ENCODE measurements at regions of chr14 and their contacts with region 1.

Region 1: DNA sequence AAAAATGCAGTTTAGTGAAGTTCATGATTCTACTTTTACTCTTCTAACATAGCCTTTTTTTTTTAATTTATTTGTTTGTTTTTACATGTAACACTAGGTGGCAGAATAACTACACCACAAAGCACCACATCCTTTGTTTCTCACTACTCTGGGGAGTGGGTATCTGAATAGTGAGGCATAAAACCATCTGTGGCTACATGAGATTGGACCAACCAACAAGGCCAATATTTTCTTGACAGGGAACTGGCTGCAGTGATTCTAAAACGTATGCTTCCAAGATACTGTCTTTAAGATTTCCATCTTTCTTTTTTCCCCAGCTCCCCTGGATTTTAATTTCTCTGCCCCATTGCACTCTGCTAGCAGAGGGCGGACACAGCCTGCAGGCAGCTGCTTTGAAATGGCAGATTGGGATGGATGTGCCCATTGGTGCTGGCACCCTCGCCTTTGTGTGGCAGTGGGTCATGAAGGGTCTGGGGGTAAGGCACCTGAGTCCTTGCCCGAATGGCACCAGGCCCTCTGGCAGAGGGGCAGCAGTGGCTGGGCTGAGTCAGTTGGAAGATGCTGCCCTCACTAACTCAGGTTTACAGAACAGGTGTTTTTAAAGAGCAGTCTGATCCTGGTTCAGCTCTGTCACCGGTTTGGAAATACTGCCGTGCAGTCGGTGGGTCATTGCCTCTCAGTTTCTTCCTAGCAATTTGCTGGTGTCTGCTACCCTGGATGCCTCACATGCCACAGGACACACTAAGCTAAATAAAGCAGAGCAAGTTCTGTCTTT is 429.1 kb downstream of the RAD51B start:
- DNase-seq: peak in 3 of 5 donors; percentile 32 to 66 (median 39)
- ATAC-seq: peak; percentile 56 to 75 (median 70)
- H3K4me3 ChIP-seq: no peak overlapping the region
- H3K27ac ChIP-seq: peak overlapping the region in 11 of 12 donors; percentile 23 to 91 (median 85)
- H3K4me1 ChIP-seq: peaks cover 17 to 84% (median 78%) of the 10 kb centered on the region in 12 donors
- H3K27me3 ChIP-seq: no peaks in the 10 kb centered on the region
- CTCF ChIP-seq: peak; percentile 54 to 80 (median 68)
- POLR2A ChIP-seq: no peak

Region 2: DNA sequence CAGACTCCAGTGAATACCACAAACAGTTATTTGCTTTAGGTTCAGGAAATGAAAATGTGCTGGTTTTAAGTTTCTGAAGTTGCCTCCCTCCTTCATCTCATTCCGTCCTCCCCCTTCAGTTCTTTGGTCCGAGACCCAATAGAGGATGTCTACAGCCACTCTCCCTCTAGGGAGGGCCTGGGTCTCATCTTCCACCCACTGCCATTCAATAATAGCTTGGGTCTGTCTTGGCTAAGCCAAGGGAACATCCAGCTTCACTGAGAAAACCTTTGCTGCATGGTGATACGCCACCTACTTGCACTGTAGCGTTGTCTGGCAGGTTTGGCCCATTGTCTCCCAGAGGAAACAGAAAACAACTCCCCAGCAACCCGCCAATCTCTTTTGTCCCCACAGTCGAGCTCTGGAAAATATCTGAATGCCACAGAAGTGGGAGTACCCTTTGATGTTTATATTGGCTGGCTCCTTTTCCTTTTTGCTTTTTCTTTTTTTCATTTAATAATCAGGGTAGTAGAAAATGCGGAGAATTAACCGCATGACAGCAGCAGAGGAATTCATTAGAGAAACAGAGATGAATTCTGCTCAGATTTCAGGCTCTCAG is 49.0 kb before region 1 on chr14:
- intact Hi-C with region 1: no loop called
- DNase-seq: peak in 4 of 5 donors; percentile 34 to 66 (median 48)
- ATAC-seq: peak; percentile 61 to 91 (median 74)
- H3K4me3 ChIP-seq: peak overlapping the region in 1 of 12 donors; percentile 3
- H3K27ac ChIP-seq: peak overlapping the region; percentile 48 to 80 (median 64)
- H3K4me1 ChIP-seq: peaks cover 0 to 34% (median 14%) of the 10 kb centered on the region in 12 donors
- H3K27me3 ChIP-seq: no peaks in the 10 kb centered on the region
- CTCF ChIP-seq: peak in 5 of 12 donors; percentile 15 to 41 (median 23)
- POLR2A ChIP-seq: no peak

Region 3: GRCh38 chr14:68283378-68284123 is 34.9 kb after region 1 on chr14:
- intact Hi-C with region 1: no loop called
- DNase-seq: peak in 4 of 5 donors; percentile 38 to 69 (median 42)
- ATAC-seq: peak; percentile 36 to 68 (median 48)
- H3K4me3 ChIP-seq: no peak overlapping the region
- H3K27ac ChIP-seq: peak overlapping the region in 9 of 12 donors; percentile 0 to 82 (median 40)
- H3K4me1 ChIP-seq: peaks cover 0 to 63% (median 9%) of the 10 kb centered on the region in 12 donors
- H3K27me3 ChIP-seq: no peaks in the 10 kb centered on the region
- CTCF ChIP-seq: no peak
- POLR2A ChIP-seq: no peak

Region 4: DNA sequence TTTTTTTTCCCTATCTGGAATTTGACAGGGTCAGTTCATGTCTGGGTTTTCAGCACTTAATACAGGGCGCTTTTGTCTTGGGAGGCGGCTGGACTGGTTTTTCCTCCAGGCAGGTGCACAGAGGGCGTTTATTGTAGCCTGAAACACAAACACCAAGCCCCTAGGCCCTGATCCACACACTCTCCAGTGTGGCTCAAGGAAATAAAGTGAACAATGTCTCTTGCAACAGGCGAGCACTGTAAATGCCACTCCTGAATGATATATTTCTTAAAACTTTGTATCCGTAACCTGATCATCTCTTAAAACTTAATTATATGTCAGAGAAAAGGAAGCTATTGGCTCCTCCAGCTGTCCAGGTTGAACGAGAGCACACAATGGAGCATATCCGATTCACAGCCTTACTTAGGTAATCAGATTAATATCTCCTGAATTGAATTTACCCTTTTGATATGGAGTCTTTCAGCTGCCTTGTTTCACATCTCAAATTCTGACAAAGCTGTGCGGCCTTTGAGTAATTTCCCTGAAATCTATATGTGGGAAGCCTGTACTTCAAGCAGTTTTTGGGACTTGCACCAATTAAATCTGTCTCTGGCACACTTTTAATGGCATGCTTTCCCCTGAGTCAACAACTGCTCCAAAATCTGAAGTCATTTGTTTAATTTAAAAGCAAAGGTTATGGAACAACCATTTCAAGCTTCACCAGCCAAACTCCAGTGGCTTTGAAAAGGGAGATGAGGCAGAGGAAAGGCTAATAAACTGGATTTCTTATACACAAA is 58.5 kb after region 1 on chr14:
- intact Hi-C with region 1: loop called in 1 of 10 experiments (anchors 10 kb)
- DNase-seq: no peak
- ATAC-seq: peak in 2 of 4 donors; percentile 40 to 68
- H3K4me3 ChIP-seq: no peak overlapping the region
- H3K27ac ChIP-seq: peak overlapping the region in 9 of 12 donors; percentile 2 to 74 (median 49)
- H3K4me1 ChIP-seq: peaks cover 0 to 33% (median 9%) of the 10 kb centered on the region in 12 donors
- H3K27me3 ChIP-seq: no peaks in the 10 kb centered on the region
- CTCF ChIP-seq: no peak
- POLR2A ChIP-seq: no peak

Region 5: GRCh38 chr14:68408680-68409079 is 160.0 kb after region 1 on chr14:
- intact Hi-C with region 1: loop called in 1 of 10 experiments (anchors 10 kb)
- DNase-seq: no peak
- ATAC-seq: no peak
- H3K4me3 ChIP-seq: no peak overlapping the region
- H3K27ac ChIP-seq: peak overlapping the region in 1 of 12 donors; percentile 27
- H3K4me1 ChIP-seq: peaks cover 0 to 48% (median 13%) of the 10 kb centered on the region in 12 donors
- H3K27me3 ChIP-seq: no peaks in the 10 kb centered on the region
- CTCF ChIP-seq: peak in 2 of 12 donors; percentile 7 to 19
- POLR2A ChIP-seq: no peak

Region 6: GRCh38 chr14:68548194-68549056 is 299.8 kb after region 1 on chr14:
- intact Hi-C with region 1: loop called in 1 of 10 experiments (anchors 10 kb)
- DNase-seq: peak; percentile 88 to 96 (median 92)
- ATAC-seq: peak; percentile 89 to 94 (median 92)
- H3K4me3 ChIP-seq: no peak overlapping the region
- H3K27ac ChIP-seq: peak overlapping the region; percentile 87 to 99 (median 96)
- H3K4me1 ChIP-seq: peaks cover 11 to 89% (median 63%) of the 10 kb centered on the region in 12 donors
- H3K27me3 ChIP-seq: no peaks in the 10 kb centered on the region
- CTCF ChIP-seq: no peak
- POLR2A ChIP-seq: peak in 1 of 2 donors; percentile 47

Region 7: DNA sequence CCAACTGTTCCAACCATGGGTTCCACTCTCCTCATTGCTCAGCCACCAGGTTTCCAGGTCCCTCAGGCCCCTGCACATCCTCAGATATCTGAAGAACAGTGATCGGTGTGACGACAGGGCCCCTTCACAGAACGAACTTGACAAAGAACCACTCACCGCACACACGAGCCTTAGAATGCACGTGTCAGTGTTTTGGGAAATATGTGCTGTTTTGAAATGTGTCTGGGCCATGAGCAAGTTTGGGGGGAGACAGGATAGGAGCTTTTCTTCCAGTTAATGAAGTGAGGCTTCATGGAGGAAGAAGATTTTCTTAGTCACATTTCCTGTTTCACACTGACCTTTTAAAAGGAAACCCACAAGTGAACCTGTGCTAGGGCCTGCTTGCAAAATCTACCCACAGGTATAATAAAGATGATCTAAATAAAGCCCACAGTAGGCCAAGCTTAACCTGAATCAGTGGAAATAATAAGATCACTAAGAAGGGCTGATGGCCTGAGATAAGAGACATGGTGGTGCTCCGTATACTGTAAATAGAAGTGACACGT is 485.6 kb after region 1 on chr14:
- intact Hi-C with region 1: loop called in 2 of 10 experiments (anchors 5 kb)
- DNase-seq: no peak
- ATAC-seq: peak in 1 of 4 donors; percentile 7
- H3K4me3 ChIP-seq: no peak overlapping the region
- H3K27ac ChIP-seq: peak overlapping the region in 5 of 12 donors; percentile 30 to 79 (median 47)
- H3K4me1 ChIP-seq: peaks cover 0 to 82% (median 47%) of the 10 kb centered on the region in 12 donors
- H3K27me3 ChIP-seq: no peaks in the 10 kb centered on the region
- CTCF ChIP-seq: no peak
- POLR2A ChIP-seq: no peak

Measured in heart left ventricle (tissue), 16 donors.